ENCODE measurements at regions of chr1 and their contacts with region 1.

Region 1: DNA sequence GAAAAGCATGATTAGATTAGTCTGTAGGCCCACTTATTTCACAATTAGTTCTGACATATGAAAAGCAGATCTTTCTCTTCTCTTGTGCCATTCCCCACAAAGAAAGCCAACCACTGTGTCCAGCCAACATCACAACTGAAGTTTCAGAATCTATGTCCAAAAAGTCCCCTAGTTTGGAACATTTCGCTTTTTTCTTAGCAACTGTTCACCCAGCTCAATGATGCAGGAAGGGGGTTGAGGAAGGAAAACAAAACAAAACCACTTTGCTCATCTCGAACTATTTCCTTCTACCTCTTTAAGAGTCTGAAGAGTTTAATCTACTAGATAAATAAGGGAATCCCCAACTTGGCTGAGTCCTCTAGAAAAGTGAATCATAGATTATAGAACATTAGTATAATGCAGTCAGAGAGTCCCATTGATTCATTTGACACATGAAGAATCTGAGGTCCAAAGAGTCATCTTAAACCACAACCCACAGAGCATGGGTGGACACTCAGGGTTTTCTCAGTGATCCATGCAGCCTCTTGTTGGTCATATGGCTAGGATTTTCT is 159.3 kb upstream of the SGIP1 start:
- DNase-seq: peak; percentile 77
- H3K4me3 Mint-ChIP-seq: peak overlapping the region; percentile 50
- H3K27ac Mint-ChIP-seq: peak overlapping the region; percentile 94
- H3K4me1 Mint-ChIP-seq: peaks cover 76% of the 10 kb centered on the region
- H3K27me3 Mint-ChIP-seq: no peaks in the 10 kb centered on the region

Region 2: GRCh38 chr1:65067491-65068201 is 1307.0 kb before region 1 on chr1:
- CTCF ChIA-PET with region 1: no interaction called
- intact Hi-C with region 1: loop called (anchors 10 kb)
- DNase-seq: peak; percentile 71
- H3K4me3 Mint-ChIP-seq: peak overlapping the region; percentile 87
- H3K27ac Mint-ChIP-seq: peak overlapping the region; percentile 95
- H3K4me1 Mint-ChIP-seq: peaks cover 51% of the 10 kb centered on the region
- H3K27me3 Mint-ChIP-seq: no peaks in the 10 kb centered on the region

Region 3: DNA sequence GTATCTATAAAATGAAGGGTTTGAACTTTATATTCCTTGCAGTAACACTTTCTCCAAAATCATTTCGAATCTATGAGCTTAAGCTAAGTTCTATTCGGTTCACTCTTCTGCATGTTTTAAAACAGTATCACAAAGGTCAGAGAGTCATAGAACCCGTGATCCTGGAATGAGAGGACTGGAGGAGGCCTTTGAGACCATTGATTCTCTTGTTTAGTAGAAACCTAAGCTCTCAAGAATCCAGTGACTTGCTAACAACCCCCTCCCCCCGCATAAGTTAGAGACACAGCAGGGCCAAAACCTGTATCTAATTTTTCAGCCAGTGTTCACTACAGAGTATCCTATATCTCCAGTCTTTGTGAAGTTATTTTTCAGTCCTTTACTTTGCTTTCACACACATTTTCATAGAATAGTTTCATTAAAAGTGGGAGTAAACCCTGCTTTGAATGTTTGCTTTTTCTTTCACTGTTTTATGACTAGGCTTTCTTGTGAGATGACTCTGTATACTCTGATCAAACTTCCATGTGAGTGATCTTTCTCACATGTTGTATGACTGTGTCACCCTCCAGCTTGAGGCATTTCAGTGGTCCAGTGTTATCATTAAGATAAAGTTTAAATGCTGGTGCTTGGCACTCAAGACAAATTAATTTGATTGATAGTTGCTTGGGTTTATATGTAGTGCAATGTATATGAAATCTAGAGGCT is 116.1 kb before region 1 on chr1:
- CTCF ChIA-PET with region 1: interaction called, 5 read pairs
- intact Hi-C with region 1: loop called (anchors 1 kb)
- DNase-seq: peak; percentile 43
- H3K4me3 Mint-ChIP-seq: no peak overlapping the region
- H3K27ac Mint-ChIP-seq: peak overlapping the region; percentile 3
- H3K4me1 Mint-ChIP-seq: peaks cover 84% of the 10 kb centered on the region
- H3K27me3 Mint-ChIP-seq: no peaks in the 10 kb centered on the region

Region 4: DNA sequence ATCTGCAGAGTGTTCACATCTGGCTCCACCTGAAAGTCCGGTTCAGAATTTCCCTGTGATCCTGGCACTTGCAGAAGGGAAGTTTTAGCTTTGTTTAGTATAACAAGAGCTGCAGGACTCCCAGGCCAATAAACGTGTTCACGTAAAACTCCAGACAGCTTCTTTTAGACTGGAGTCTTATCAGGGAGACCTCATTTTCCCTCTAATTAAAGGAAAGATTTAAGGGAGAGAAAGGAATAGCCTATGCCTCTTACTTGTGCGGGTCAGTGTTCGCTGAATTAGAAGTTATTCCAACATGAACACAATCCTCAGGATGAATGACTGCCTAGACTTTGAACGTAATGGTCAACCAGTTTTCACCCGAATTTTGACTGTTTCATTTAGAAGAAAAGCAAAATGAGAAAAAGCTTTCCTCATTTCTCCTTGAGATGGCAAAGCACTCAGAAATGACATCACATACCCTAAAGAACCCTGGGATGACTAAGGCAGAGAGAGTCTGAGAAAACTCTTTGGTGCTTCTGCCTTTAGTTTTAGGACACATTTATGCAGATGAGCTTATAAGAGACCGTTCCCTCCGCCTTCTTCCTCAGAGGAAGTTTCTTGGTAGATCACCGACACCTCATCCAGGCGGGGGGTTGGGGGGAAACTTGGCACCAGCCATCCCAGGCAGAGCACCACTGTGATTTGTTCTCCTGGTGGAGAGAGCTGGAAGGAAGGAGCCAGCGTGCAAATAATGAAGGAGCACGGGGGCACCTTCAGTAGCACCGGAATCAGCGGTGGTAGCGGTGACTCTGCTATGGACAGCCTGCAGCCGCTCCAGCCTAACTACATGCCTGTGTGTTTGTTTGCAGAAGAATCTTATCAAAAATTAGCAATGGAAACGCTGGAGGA is 42.7 kb before region 1 on chr1:
- CTCF ChIA-PET with region 1: interaction called, 3 read pairs
- intact Hi-C with region 1: loop called (anchors 1 kb)
- DNase-seq: peak; percentile 76
- H3K4me3 Mint-ChIP-seq: peak overlapping the region; percentile 98
- H3K27ac Mint-ChIP-seq: peak overlapping the region; percentile 95
- H3K4me1 Mint-ChIP-seq: peaks cover 42% of the 10 kb centered on the region
- H3K27me3 Mint-ChIP-seq: no peaks in the 10 kb centered on the region

Region 5: GRCh38 chr1:66446261-66447001 is 71.8 kb after region 1 on chr1:
- CTCF ChIA-PET with region 1: interaction called, 61 read pairs
- intact Hi-C with region 1: no loop called
- DNase-seq: peak; percentile 45
- H3K4me3 Mint-ChIP-seq: peak overlapping the region; percentile 74
- H3K27ac Mint-ChIP-seq: peak overlapping the region; percentile 92
- H3K4me1 Mint-ChIP-seq: peaks cover 26% of the 10 kb centered on the region
- H3K27me3 Mint-ChIP-seq: peaks cover 5% of the 10 kb centered on the region

Region 6: DNA sequence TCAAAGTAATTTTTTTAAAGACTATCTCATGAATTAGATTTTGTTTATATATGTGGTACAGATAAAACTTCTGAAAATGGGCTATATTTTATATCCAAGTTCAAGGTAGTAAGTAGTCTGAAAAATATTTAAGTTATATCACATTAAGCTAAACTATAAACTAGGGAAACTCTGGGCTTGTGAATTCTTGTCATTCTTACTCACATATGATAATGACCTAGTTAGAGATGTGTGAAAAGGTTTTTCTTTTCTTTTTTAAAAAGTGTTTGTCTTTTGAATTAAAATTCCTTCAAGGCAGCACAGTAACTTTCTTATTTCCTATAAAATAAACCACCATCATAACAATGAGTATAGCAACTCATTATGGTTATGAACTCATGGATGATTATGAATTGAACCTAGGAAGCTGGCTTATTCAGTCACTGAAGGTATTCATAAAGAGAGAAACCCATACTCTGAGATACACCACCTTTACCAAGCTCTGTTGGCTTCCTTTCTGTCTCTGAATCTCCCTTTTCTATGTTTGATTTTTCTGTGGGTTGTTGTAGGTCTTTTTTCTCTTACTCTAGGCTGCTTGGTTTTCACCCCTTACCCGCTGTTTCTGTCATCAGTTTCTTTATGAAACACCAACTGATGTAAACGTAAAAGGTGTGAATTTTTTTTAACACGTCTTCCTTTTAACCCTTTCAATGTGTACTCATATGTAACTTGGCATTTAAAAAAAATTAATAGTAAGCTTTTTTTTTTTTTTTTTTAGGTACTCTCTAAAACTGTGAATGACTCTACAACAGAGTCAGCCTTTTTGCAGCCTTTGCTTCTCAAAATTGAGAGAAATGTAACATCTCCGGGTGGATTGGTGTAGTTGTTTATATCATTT is 958.3 kb after region 1 on chr1:
- CTCF ChIA-PET with region 1: no interaction called
- intact Hi-C with region 1: loop called (anchors 1 kb)
- DNase-seq: peak; percentile 67
- H3K4me3 Mint-ChIP-seq: no peak overlapping the region
- H3K27ac Mint-ChIP-seq: peak overlapping the region; percentile 97
- H3K4me1 Mint-ChIP-seq: peaks cover 79% of the 10 kb centered on the region
- H3K27me3 Mint-ChIP-seq: no peaks in the 10 kb centered on the region

Measured in activated naive CD4-positive, alpha-beta T cell treated with anti-CD3 and anti-CD28 coated beads for 36 hours (primary cell).